Calu3 (cell line): ENCODE measurements at regions of chr5 and their contacts with region 1.

Region 1: GRCh38 chr5:172902497-172903200 is 56.6 kb upstream of the RPL26L1 start:
- DNase-seq: peak; percentile 80
- H3K4me3 Mint-ChIP-seq: no peak overlapping the region
- H3K27ac Mint-ChIP-seq: peak overlapping the region; percentile 98
- H3K4me1 Mint-ChIP-seq: peaks cover 47% of the 10 kb centered on the region
- H3K27me3 Mint-ChIP-seq: no peaks in the 10 kb centered on the region
- CTCF ChIP-seq: no peak

Region 2: DNA sequence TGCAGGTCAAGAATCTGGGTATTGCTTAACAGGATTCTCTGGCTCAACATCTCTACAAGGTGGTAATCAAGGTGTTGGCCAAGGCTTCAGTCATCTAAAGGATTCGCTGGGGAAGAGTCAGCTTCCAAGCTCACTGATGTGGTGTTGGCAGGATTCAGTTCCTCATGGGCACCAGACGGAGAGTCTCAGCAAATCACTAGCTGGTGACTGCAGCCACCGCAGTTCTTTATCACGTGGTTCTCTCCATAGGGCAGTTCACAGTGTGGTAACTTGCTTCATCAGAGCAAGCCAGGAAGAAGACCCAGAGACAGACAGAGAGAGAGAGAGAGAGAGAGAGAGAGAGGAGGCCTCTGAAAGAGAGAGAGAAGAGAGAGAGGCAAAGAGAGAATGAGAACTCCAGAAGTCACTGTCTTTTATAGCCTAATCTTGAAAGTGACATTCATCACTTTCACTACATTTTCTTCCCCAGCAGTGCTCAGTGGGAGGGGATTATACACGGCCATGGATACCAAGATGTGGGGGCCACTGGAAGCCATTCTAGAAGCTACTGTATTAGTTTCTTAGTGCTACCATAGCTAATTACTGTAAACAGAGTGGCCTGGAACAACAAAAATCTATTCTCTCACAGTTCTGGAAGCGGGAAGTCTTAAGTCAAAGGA is 1226.2 kb before region 1 on chr5:
- CTCF ChIA-PET with region 1: no interaction called
- intact Hi-C with region 1: no loop called
- DNase-seq: no peak
- H3K4me3 Mint-ChIP-seq: no peak overlapping the region
- H3K27ac Mint-ChIP-seq: no peak overlapping the region
- H3K4me1 Mint-ChIP-seq: no peaks in the 10 kb centered on the region
- H3K27me3 Mint-ChIP-seq: peaks cover 100% of the 10 kb centered on the region
- CTCF ChIP-seq: no peak

Region 3: GRCh38 chr5:172714491-172715421 is 187.9 kb before region 1 on chr5:
- CTCF ChIA-PET with region 1: interaction called, 17 read pairs
- intact Hi-C with region 1: no loop called
- DNase-seq: peak; percentile 83
- H3K4me3 Mint-ChIP-seq: no peak overlapping the region
- H3K27ac Mint-ChIP-seq: no peak overlapping the region
- H3K4me1 Mint-ChIP-seq: peaks cover 8% of the 10 kb centered on the region
- H3K27me3 Mint-ChIP-seq: peaks cover 35% of the 10 kb centered on the region
- CTCF ChIP-seq: peak; percentile 93

Region 4: DNA sequence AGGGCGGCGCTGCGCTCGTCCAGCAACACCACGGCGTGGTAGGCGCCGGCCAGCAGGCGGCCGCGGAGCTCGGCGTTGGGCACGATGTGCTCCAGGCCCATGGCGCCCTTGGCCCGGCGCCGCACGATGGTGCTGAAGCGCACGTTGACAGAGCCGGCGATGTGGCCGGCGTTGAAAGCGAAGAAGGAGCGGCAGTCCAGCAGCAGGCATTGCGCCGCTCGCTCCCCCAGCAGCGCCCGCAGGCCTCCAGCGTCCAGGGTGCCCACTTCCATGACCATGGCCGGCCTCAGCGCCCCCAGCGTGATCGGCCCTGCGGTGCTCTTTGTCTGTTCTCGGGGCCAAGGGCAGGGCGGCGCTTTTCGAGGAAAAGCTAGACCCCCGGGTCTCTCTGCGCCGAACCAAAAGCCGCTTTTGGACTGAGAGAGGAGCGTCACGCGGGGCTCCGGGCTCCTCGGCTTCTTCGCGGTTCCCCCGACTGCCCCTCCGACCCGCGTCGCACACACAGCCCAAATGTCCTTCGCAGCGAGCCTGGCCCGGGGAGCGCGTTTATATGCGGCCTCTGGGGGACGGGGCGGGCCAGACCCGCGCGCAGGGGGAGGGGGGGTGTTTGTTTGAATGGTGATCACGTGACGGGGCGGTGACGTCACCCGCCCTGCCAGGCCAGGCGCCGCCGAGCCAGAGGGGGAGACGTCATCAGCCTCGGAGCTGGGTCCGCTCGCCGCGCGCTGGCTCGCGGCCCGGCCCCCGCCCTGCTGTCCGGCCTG is 131.8 kb before region 1 on chr5 and contains the start of gene DUSP1:
- CTCF ChIA-PET with region 1: interaction called, 19 read pairs
- intact Hi-C with region 1: loop called (anchors 1 kb)
- DNase-seq: peak; percentile 99
- H3K4me3 Mint-ChIP-seq: peak within 1 kb of the TSS; percentile 88
- H3K27ac Mint-ChIP-seq: peak within 1 kb of the TSS; percentile 95
- H3K4me1 Mint-ChIP-seq: peaks cover 69% of the 10 kb centered on the region
- H3K27me3 Mint-ChIP-seq: no peaks in the 10 kb centered on the region
- CTCF ChIP-seq: peak; percentile 71
- total RNA-seq, gene DUSP1: 38.1 and 50.5 TPM in 2 replicates

Region 5: DNA sequence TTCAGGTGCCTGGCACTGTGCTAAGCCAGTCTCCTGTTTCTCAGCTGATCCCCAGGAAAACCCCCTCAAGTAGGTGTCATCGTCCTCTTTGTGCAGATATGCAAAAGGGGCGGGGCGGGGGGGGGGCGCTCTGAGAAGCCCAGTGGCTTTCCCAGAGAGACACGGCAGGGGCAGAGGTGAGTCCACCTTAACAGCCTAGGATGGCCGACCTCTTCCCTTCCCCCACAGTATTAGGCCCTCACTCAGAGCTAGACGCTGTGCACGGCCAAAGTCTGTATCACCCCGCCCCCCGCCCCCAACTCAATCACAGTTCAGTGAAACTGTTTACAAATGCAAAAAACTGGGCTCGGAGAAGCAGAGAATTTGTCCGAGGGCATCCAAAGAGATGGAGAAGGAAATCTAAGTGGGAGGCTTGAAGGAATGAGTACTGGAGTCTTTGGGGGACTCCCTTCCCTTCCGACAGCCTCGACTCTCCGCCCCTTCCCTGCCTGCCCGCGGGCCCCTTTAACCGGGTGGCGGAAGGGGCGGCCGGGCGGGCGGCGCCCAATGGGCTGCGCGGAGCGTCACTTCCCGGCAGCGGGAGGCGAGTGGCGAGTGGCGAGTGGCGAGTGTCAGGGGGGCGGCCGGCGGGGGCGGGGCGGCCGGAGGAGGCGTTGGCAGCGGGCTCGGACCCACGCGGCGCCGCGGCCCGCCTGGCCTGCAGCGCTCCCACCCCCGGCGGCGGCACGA is 68.8 kb before region 1 on chr5 and contains the start of gene ERGIC1:
- CTCF ChIA-PET with region 1: no interaction called
- intact Hi-C with region 1: loop called (anchors 10 kb)
- DNase-seq: peak; percentile 87
- H3K4me3 Mint-ChIP-seq: peak within 1 kb of the TSS; percentile 79
- H3K27ac Mint-ChIP-seq: peak within 1 kb of the TSS; percentile 66
- H3K4me1 Mint-ChIP-seq: peaks cover 30% of the 10 kb centered on the region
- H3K27me3 Mint-ChIP-seq: no peaks in the 10 kb centered on the region
- CTCF ChIP-seq: no peak
- total RNA-seq, gene ERGIC1: 231 and 235 TPM in 2 replicates

Region 6: GRCh38 chr5:172973127-172973916 is 70.7 kb after region 1 on chr5:
- CTCF ChIA-PET with region 1: no interaction called
- intact Hi-C with region 1: no loop called
- DNase-seq: no peak
- H3K4me3 Mint-ChIP-seq: no peak overlapping the region
- H3K27ac Mint-ChIP-seq: no peak overlapping the region
- H3K4me1 Mint-ChIP-seq: no peaks in the 10 kb centered on the region
- H3K27me3 Mint-ChIP-seq: peaks cover 12% of the 10 kb centered on the region
- CTCF ChIP-seq: no peak

Region 7: GRCh38 chr5:173016621-173017047 is 114.0 kb after region 1 on chr5:
- CTCF ChIA-PET with region 1: interaction called, 13 read pairs
- intact Hi-C with region 1: no loop called
- DNase-seq: peak; percentile 43
- H3K4me3 Mint-ChIP-seq: peak overlapping the region; percentile 44
- H3K27ac Mint-ChIP-seq: peak overlapping the region; percentile 94
- H3K4me1 Mint-ChIP-seq: peaks cover 31% of the 10 kb centered on the region
- H3K27me3 Mint-ChIP-seq: no peaks in the 10 kb centered on the region
- CTCF ChIP-seq: no peak